ENCODE measurements at regions of chr15 and their contacts with region 1.

Region 1: DNA sequence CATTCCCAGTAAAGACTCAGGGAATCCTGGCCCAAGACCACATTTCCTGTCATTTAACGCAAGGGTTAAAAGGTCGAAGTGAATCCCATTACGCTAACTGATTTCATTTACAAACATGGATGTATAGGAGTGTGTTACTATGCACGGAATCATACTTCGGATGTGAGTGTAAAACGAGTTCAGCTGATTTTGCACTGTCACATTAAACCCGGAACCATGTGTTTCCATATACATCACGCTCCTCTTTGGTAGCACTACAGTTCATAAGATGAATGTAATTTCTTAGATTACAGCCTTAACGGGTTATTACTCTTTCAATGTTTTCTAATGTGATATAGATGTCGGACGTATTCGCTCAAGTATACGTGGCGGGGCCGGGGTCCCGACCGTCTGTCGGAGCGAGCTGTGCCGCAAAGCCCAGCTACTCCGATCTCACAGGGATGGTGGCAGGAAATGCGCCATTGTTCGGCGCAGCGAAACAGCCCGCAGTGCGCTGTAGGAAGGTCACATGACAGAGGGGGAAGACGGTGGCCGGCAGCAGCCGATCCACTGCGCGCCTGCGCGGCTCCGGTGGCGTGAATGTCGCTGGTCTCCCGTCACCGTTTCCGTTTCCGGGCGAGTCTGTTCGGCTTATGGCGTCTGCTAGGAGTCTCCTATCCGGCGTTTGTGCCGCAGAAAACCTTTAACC is 97.3 kb downstream of the NPAP1 start:
- DNase-seq: peak in 1 of 2 donors; percentile 79
- H3K4me3 ChIP-seq: peak overlapping the region; percentile 38 to 62
- H3K27ac ChIP-seq: peak overlapping the region; percentile 31 to 61
- H3K4me1 ChIP-seq: no peaks in the 10 kb centered on the region
- H3K27me3 ChIP-seq: no peaks in the 10 kb centered on the region
- CTCF ChIP-seq: no peak

Region 2: GRCh38 chr15:24848050-24848449 is 75.2 kb after region 1 on chr15:
- intact Hi-C with region 1: loop called (anchors 5 kb)
- DNase-seq: peak in 1 of 2 donors; percentile 68
- H3K4me3 ChIP-seq: peak overlapping the region; percentile 36 to 48
- H3K27ac ChIP-seq: peak overlapping the region; percentile 40 to 50
- H3K4me1 ChIP-seq: no peaks in the 10 kb centered on the region
- H3K27me3 ChIP-seq: no peaks in the 10 kb centered on the region
- CTCF ChIP-seq: no peak

Region 3: DNA sequence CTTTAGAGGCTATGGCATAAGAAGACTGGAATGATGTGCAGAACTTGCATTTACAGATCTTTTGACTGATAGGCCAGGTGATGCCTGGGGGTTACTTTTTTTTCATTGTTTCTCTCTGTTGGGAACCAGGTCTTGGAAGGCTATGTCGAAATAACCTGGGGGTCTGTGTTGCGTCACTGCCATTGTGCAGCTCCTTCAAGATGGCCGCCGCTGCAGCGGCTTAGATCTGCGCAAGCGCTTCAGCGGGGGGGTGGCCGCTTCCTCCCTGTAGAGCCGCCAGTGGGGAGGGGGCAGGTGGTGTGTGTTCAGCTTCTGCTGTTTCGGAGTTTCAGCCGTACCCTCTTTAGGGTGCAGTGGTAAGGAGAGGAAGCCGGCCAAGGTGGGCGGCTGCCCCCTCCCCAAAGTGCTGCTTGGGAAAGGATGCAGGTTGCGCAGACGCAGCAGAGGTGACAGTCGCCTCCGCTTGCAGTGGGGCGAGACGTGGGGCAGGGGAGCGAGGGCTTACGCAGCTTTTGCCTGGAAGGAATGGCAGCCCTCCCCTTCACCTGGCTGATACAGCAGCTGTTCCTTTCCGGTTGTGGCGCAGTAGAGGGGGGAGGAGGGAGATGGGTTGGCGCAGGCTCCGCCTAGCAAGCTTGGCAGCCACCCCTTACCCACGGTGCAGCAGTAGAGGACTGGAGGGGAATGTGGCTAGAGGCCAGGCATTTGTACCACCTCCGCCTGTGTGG is 183.4 kb after region 1 on chr15:
- intact Hi-C with region 1: loop called (anchors 10 kb)
- DNase-seq: peak; percentile 21 to 91
- H3K4me3 ChIP-seq: peak overlapping the region; percentile 68 to 74
- H3K27ac ChIP-seq: peak overlapping the region; percentile 94 to 95
- H3K4me1 ChIP-seq: peaks cover 0 to 5% of the 10 kb centered on the region in 2 donors
- H3K27me3 ChIP-seq: no peaks in the 10 kb centered on the region
- CTCF ChIP-seq: no peak